Caco-2 (cell line): ENCODE measurements at regions of chr2 and their contacts with region 1.

Region 1: GRCh38 chr2:174004905-174005605 is 39.9 kb upstream of the SP3 start:
- DNase-seq: no peak
- H3K4me3 ChIP-seq: no peak overlapping the region
- H3K4me3 Mint-ChIP-seq: peak overlapping the region; percentile 56
- H3K27ac Mint-ChIP-seq: peak overlapping the region; percentile 81
- H3K4me1 ChIP-seq: peaks cover 71% of the 10 kb centered on the region
- H3K4me1 Mint-ChIP-seq: peaks cover 73% of the 10 kb centered on the region
- H3K27me3 ChIP-seq: no peaks in the 10 kb centered on the region
- H3K27me3 Mint-ChIP-seq: no peaks in the 10 kb centered on the region
- CTCF ChIP-seq: no peak

Region 2: GRCh38 chr2:173884025-173884802 is 120.8 kb before region 1 on chr2:
- CTCF ChIA-PET with region 1: interaction called, 5 read pairs
- POLR2A ChIA-PET with region 1: no interaction called
- intact Hi-C with region 1: loop called (anchors 1 kb)
- DNase-seq: peak; percentile 56 to 64
- H3K4me3 ChIP-seq: no peak overlapping the region
- H3K4me3 Mint-ChIP-seq: no peak overlapping the region
- H3K27ac Mint-ChIP-seq: no peak overlapping the region
- H3K4me1 ChIP-seq: no peaks in the 10 kb centered on the region
- H3K4me1 Mint-ChIP-seq: no peaks in the 10 kb centered on the region
- H3K27me3 ChIP-seq: no peaks in the 10 kb centered on the region
- H3K27me3 Mint-ChIP-seq: no peaks in the 10 kb centered on the region
- CTCF ChIP-seq: peak; percentile 62 to 83

Region 3: DNA sequence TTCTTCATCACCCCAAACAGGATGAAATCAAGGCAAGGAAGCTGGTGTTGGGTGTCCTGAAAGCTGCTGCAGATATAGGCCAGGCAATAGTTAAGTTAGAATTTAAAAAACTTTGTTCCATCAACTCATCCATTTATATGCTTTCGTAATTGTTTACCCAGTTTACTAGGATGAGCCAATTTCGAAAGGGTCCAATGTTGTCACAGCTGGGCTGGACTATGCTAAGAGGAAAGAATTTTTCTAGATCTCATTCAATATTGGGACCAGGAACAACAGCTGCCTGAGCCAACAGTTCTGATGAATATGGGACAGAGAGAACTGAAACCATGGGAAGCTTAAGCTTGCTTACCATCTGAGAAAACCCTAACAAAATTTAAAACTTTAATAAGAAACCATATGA is 18.2 kb before region 1 on chr2:
- CTCF ChIA-PET with region 1: interaction called, 3 read pairs
- POLR2A ChIA-PET with region 1: no interaction called
- intact Hi-C with region 1: loop called (anchors 1 kb)
- DNase-seq: peak in 1 of 2 experiments; percentile 46
- H3K4me3 ChIP-seq: no peak overlapping the region
- H3K4me3 Mint-ChIP-seq: no peak overlapping the region
- H3K27ac Mint-ChIP-seq: peak overlapping the region; percentile 23
- H3K4me1 ChIP-seq: peaks cover 40% of the 10 kb centered on the region
- H3K4me1 Mint-ChIP-seq: peaks cover 40% of the 10 kb centered on the region
- H3K27me3 ChIP-seq: no peaks in the 10 kb centered on the region
- H3K27me3 Mint-ChIP-seq: no peaks in the 10 kb centered on the region
- CTCF ChIP-seq: no peak

Region 4: GRCh38 chr2:174033166-174033555 is 28.1 kb after region 1 on chr2:
- CTCF ChIA-PET with region 1: interaction called, 4 read pairs
- POLR2A ChIA-PET with region 1: no interaction called
- intact Hi-C with region 1: loop called (anchors 2 kb)
- DNase-seq: no peak
- H3K4me3 ChIP-seq: no peak overlapping the region
- H3K4me3 Mint-ChIP-seq: peak overlapping the region; percentile 60
- H3K27ac Mint-ChIP-seq: peak overlapping the region; percentile 97
- H3K4me1 ChIP-seq: peaks cover 60% of the 10 kb centered on the region
- H3K4me1 Mint-ChIP-seq: peaks cover 69% of the 10 kb centered on the region
- H3K27me3 ChIP-seq: no peaks in the 10 kb centered on the region
- H3K27me3 Mint-ChIP-seq: no peaks in the 10 kb centered on the region
- CTCF ChIP-seq: no peak

Region 5: DNA sequence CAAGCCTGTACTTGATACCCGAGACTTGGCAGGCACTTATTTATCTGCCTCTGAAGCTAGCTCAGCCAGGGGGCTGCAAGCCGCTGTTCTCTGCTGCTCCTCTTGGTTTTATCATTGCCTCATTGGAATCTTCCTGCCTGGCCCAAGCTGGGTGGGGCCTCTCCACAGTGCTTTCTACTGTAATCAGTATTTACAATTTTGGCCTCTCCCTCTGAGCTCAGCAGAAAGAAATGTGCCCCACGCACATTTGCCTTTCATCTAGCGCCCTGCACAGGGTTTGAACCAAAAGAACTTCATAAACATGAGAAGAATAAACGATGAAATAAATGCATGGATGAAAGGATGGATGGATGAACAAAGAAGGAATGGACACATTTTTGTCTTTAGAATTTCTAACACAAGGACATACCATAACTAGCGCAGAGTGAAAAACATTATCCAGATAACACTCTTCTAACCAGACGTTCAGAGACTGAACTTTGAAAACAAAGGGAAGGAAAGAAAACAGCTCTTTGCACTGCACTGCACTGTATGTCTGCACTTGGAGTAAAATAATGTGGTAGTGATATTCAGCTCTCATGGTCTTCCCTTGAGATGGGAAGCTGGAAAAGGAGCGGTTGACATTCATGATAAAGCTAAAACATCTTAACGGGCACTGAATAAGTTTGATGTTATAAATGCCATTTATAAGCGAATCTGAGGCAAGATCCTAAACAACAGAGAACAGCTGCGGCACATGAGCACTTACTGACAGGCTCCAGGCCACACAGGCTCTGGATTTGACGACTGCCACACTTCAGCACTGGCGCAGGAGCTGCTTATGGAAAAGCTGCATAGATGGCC is 46.9 kb after region 1 on chr2:
- CTCF ChIA-PET with region 1: interaction called, 4 read pairs
- POLR2A ChIA-PET with region 1: interaction called, 4 read pairs
- intact Hi-C with region 1: loop called (anchors 1 kb)
- DNase-seq: peak; percentile 92 to 94
- H3K4me3 ChIP-seq: peak overlapping the region; percentile 1
- H3K4me3 Mint-ChIP-seq: peak overlapping the region; percentile 77
- H3K27ac Mint-ChIP-seq: peak overlapping the region; percentile 90
- H3K4me1 ChIP-seq: peaks cover 40% of the 10 kb centered on the region
- H3K4me1 Mint-ChIP-seq: peaks cover 34% of the 10 kb centered on the region
- H3K27me3 ChIP-seq: no peaks in the 10 kb centered on the region
- H3K27me3 Mint-ChIP-seq: no peaks in the 10 kb centered on the region
- CTCF ChIP-seq: no peak